ENCODE measurements at regions of chr1 and their contacts with region 1.

Region 1: DNA sequence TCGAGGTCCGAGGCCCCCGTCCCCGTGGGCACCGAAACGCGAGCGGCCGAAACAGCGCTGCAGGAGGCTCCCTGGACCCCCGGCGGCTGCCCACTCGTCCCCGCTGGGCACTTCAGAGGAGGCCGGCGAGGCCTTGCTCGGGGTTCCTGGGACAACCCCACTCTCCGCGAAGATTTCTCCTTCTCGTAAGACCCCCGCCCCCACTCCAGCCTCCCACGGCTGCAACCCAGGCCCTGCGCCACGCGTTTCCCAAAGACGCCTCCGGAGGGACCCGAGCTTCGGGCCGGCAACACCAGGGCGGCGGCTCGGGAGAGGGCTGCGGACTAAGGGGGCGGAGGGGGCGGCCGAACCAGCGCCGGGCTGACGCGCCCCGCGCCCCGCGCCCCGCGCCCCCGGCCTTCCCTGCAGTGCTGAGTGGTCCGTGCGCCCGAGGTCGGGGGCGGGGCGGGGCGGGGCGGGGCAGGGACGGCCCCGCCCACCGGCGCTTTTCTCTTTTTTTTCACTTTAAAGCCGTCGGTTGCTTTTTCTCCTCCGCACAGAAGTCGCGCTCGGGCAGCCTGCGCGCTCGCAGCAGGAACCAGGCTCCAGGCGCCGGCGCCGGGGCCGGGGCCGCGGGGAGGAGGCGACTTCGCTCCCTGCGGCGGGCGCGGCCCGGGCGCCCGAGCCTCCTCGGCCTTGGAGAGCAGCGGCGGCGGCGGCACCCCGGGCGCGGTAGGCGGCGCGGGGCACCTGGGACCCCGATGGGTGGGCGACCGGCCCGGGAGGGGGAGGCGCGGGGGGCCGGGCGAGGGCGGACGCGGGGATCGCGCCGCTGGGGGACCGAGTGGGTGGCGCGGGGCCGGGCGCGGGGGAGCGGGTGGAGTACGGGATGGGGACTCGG is at the start of gene SPSB1:
- DNase-seq: no peak
- H3K4me3 ChIP-seq: peak within 1 kb of the TSS; percentile 60
- H3K27me3 ChIP-seq: no peaks in the 10 kb centered on the region
- CTCF ChIP-seq: no peak
- polyA plus RNA-seq, gene SPSB1: 15.1 and 19.8 TPM in 2 replicates

Region 2: DNA sequence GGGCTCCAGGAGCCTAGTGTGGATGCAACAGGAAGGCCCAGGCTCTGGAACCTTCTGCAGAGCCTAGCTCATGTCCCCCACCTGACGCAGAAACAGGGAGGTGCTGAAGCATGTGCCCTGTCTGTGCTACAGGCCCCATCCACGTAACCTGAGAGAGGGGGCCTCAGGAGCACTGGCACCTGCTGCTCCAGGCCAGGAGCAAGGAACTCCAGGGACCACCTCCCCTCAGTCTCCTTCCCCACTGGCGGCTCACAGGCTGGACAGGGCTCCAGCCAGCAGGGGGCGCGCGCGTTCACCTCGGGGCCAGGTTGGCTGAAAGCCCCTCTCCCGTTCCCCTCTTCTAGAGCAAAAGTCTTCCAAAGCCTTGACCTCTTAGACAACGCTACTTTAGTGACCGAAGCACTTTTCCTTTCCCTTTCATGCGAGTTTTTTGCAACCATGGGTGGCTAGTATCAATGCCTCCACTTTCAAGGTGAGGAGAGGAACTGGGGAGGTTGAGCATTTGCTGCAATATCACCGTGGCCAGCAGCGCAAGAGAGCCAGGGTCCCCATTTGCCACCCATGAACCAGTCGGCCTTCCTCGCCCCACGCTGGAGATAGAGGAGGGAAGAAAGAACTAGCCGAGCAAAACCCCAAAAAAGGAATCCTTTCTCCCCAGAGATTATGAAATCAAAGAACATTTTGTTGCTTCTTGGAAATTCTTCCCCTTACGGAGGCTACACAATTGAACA is 111.3 kb before region 1 on chr1:
- CTCF ChIA-PET with region 1: no interaction called
- POLR2A ChIA-PET with region 1: no interaction called
- DNase-seq: no peak
- H3K4me3 ChIP-seq: peak overlapping the region; percentile 89
- H3K27me3 ChIP-seq: no peaks in the 10 kb centered on the region
- CTCF ChIP-seq: peak; percentile 99

Region 3: GRCh38 chr1:9253453-9254105 is 39.0 kb before region 1 on chr1:
- CTCF ChIA-PET with region 1: no interaction called
- POLR2A ChIA-PET with region 1: no interaction called
- DNase-seq: no peak
- H3K4me3 ChIP-seq: no peak overlapping the region
- H3K27me3 ChIP-seq: no peaks in the 10 kb centered on the region
- CTCF ChIP-seq: no peak

Region 4: GRCh38 chr1:9270290-9270883 is 22.2 kb before region 1 on chr1:
- CTCF ChIA-PET with region 1: interaction called, 22 read pairs
- POLR2A ChIA-PET with region 1: no interaction called
- DNase-seq: no peak
- H3K4me3 ChIP-seq: no peak overlapping the region
- H3K27me3 ChIP-seq: no peaks in the 10 kb centered on the region
- CTCF ChIP-seq: no peak

Region 5: GRCh38 chr1:9275567-9276034 is 17.0 kb before region 1 on chr1:
- CTCF ChIA-PET with region 1: interaction called, 12 read pairs
- POLR2A ChIA-PET with region 1: no interaction called
- DNase-seq: no peak
- H3K4me3 ChIP-seq: no peak overlapping the region
- H3K27me3 ChIP-seq: no peaks in the 10 kb centered on the region
- CTCF ChIP-seq: no peak

Region 6: GRCh38 chr1:9449106-9449627 is 156.6 kb after region 1 on chr1:
- CTCF ChIA-PET with region 1: interaction called, 102 read pairs
- POLR2A ChIA-PET with region 1: no interaction called
- DNase-seq: no peak
- H3K4me3 ChIP-seq: no peak overlapping the region
- H3K27me3 ChIP-seq: peaks cover 2% of the 10 kb centered on the region
- CTCF ChIP-seq: no peak

Region 7: GRCh38 chr1:9466780-9467758 is 174.5 kb after region 1 on chr1:
- CTCF ChIA-PET with region 1: interaction called, 15 read pairs
- POLR2A ChIA-PET with region 1: interaction called, 4 read pairs
- DNase-seq: peak; percentile 44
- H3K4me3 ChIP-seq: peak overlapping the region; percentile 14; the same call in 1 of the 2 replicates
- H3K27me3 ChIP-seq: peaks cover 7% of the 10 kb centered on the region
- CTCF ChIP-seq: no peak

Region 8: GRCh38 chr1:9486466-9487140 is 194.0 kb after region 1 on chr1:
- CTCF ChIA-PET with region 1: interaction called, 82 read pairs
- POLR2A ChIA-PET with region 1: no interaction called
- DNase-seq: no peak
- H3K4me3 ChIP-seq: no peak overlapping the region
- H3K27me3 ChIP-seq: peaks cover 11% of the 10 kb centered on the region
- CTCF ChIP-seq: no peak

Region 9: DNA sequence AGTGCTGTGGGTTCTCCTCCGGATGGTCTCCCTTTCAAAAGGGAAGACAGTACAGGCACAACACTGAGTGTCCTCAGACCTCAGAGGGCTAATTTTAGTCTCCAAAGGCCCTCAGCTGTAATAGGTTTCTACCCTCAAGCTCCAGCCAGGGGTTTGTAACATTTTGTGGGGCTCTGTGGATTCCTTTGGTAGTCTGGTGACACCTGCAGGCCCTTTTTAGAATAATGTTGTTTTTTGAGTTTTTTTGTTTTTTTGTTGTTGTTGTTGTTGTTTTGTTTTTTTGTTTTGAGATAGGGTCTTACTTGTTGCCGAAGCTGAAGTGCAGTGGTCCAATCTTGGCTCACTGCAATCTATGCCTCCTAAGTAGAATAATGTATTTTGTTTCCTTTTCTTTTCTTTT is 281.1 kb after region 1 on chr1:
- CTCF ChIA-PET with region 1: interaction called, 15 read pairs
- POLR2A ChIA-PET with region 1: no interaction called
- DNase-seq: no peak
- H3K4me3 ChIP-seq: no peak overlapping the region
- H3K27me3 ChIP-seq: no peaks in the 10 kb centered on the region
- CTCF ChIP-seq: peak; percentile 44

Measured in BJ (cell line).